Natural killer cell (primary cell): ENCODE measurements at regions of chr5 and their contacts with region 1.

Region 1: GRCh38 chr5:15105796-15106393 is 234.3 kb upstream of the ANKH start:
- DNase-seq: peak in 1 of 2 donors; percentile 44
- ATAC-seq: peak in 2 of 3 donors; percentile 59 to 71
- H3K4me3 ChIP-seq: no peak overlapping the region
- H3K4me3 Mint-ChIP-seq: no peak overlapping the region
- H3K27ac ChIP-seq: no peak overlapping the region
- H3K27ac Mint-ChIP-seq: no peak overlapping the region
- H3K4me1 ChIP-seq: no peaks in the 10 kb centered on the region
- H3K4me1 Mint-ChIP-seq: peaks cover 0 to 5% of the 10 kb centered on the region in 2 donors
- H3K27me3 ChIP-seq: no peaks in the 10 kb centered on the region
- H3K27me3 Mint-ChIP-seq: peaks cover 0 to 4% of the 10 kb centered on the region in 2 donors
- CTCF ChIP-seq: peak; percentile 37

Region 2: GRCh38 chr5:16456103-16456832 is 1350.4 kb after region 1 on chr5:
- intact Hi-C with region 1: loop called (anchors 5 kb)
- DNase-seq: peak; percentile 42 to 83
- ATAC-seq: peak; percentile 82 to 91 (median 82)
- H3K4me3 ChIP-seq: no peak overlapping the region
- H3K4me3 Mint-ChIP-seq: peak overlapping the region; percentile 62
- H3K27ac ChIP-seq: peak overlapping the region; percentile 2
- H3K27ac Mint-ChIP-seq: peak overlapping the region; percentile 88 to 96
- H3K4me1 ChIP-seq: peaks cover 6% of the 10 kb centered on the region
- H3K4me1 Mint-ChIP-seq: peaks cover 67 to 69% of the 10 kb centered on the region in 2 donors
- H3K27me3 ChIP-seq: no peaks in the 10 kb centered on the region
- H3K27me3 Mint-ChIP-seq: no peaks in the 10 kb centered on the region
- CTCF ChIP-seq: peak; percentile 79